ENCODE measurements at regions of chr6 and their contacts with region 1.

Region 1: GRCh38 chr6:43143235-43144124 is 27.6 kb upstream of the SRF start:
- DNase-seq: peak; percentile 96
- H3K4me3 ChIP-seq: no peak overlapping the region
- H3K27ac ChIP-seq: peak overlapping the region; percentile 22
- H3K4me1 ChIP-seq: no peaks in the 10 kb centered on the region
- H3K27me3 ChIP-seq: no peaks in the 10 kb centered on the region

Region 2: DNA sequence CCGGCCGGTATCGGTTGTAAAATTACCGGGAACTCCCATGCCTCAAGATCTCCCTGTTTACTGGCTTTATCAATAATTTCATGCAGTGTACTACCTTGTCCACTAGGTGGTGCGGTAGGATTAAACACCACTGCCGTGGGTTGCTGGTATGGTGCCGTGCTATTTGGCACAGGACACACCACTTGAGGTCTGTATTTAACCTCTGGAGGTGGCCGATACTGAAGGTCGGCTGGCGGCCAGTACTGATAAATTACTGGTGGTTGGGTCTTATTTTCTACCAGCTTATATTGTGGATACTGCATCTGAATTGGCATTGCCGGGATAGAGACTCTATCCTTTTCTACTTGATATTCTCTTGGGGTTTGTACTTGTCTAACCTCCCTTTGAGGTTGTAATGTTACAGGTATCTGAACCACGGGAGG is 241.9 kb before region 1 on chr6:
- in situ Hi-C with region 1: loop called (anchors 10 kb)
- DNase-seq: peak; percentile 82
- H3K4me3 ChIP-seq: no peak overlapping the region
- H3K27ac ChIP-seq: no peak overlapping the region
- H3K4me1 ChIP-seq: no peaks in the 10 kb centered on the region
- H3K27me3 ChIP-seq: no peaks in the 10 kb centered on the region

Region 3: GRCh38 chr6:43053545-43054205 is 89.8 kb before region 1 on chr6 and contains the start of gene CUL7:
- in situ Hi-C with region 1: no loop called
- DNase-seq: peak; percentile 99
- H3K4me3 ChIP-seq: peak within 1 kb of the TSS; percentile 93
- H3K27ac ChIP-seq: peak within 1 kb of the TSS; percentile 93
- H3K4me1 ChIP-seq: peaks cover 29% of the 10 kb centered on the region
- H3K27me3 ChIP-seq: no peaks in the 10 kb centered on the region
- total RNA-seq, gene CUL7: 50.1 and 54.1 TPM in 2 replicates

Region 4: DNA sequence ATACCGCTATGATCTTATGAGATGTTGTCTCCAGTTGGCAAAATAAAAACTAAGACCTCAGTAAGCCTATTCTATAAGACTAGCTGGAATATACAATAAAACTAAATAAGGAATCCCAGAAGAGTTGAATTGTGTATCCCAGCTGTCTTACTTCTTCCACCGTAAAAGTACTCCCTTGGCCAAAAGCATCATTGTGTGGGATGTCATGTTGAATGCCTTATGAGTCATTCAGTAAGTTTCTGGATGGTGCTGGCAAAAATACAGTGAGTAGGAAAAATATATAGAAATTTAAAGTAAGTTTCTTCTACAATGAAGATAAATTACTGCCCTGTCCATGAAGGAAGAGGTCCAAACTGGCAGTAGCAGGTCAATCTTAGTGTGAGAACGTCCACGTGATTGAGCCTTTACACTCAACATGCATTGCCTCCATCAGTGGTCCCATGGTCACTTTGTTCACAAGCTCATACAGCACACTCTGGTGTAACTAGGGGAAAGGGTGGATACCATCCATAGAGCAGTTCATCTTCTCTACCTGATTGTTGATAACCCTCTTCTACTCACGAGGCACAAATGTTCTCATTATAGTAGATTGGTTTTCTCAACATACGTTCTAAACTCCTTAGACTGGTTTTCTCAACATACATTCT is 239.7 kb after region 1 on chr6:
- in situ Hi-C with region 1: no loop called
- DNase-seq: peak; percentile 81
- H3K4me3 ChIP-seq: no peak overlapping the region
- H3K27ac ChIP-seq: peak overlapping the region; percentile 9; the same call in 1 of the 2 replicates
- H3K4me1 ChIP-seq: peaks cover 11% of the 10 kb centered on the region
- H3K27me3 ChIP-seq: no peaks in the 10 kb centered on the region